Stomach (tissue), 19 donors: ENCODE measurements at regions of chr6 and their contacts with region 1.

Region 1: DNA sequence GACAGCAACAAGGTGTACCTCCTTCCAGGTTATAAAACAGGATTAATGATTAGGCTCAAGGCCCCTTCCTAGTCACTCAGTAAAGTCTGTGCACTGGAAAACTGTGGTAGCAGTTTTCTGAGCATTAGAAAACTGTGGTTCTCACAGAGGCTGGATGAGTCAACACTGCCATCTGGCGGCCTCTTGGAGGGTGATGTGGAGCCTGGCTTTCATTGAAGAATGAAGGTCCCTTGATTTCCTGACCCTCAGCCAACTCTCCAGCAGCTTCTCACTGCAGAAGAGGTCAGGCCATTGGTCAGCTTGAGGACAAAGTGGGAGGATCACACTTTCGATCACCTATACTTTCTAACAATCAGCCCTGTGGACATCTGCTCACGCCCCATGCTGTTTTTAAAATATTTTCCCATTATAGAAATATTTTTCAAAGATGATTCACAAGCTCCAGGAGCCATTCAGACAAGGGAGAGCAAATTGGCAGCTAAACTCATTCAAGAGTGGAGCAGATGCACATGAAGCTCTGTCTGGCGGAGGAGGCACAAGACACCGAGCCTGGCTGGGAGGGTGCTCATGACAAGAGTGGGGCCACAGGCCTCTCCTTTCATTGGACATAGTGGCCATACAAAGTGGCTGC is 23.2 kb downstream of the PSMB1 start:
- DNase-seq: peak; percentile 83 to 92
- H3K4me3 ChIP-seq: no peak overlapping the region
- H3K27ac ChIP-seq: no peak overlapping the region
- H3K4me1 ChIP-seq: no peaks in the 10 kb centered on the region
- H3K27me3 ChIP-seq: no peaks in the 10 kb centered on the region
- CTCF ChIP-seq: peak in 5 of 7 experiments; percentile 40 to 84 (median 66)
- EP300 ChIP-seq: no peak
- POLR2A ChIP-seq: no peak

Region 2: GRCh38 chr6:169789982-169790927 is 739.7 kb before region 1 on chr6:
- intact Hi-C with region 1: loop called (anchors 10 kb)
- DNase-seq: peak; percentile 75 to 92
- H3K4me3 ChIP-seq: peak overlapping the region; percentile 42 to 52 (median 46)
- H3K27ac ChIP-seq: peak overlapping the region; percentile 45 to 80 (median 72)
- H3K4me1 ChIP-seq: peaks cover 6 to 33% (median 21%) of the 10 kb centered on the region in 4 donors
- H3K27me3 ChIP-seq: no peaks in the 10 kb centered on the region
- CTCF ChIP-seq: peak in 5 of 7 experiments; percentile 94 to 99 (median 95)
- EP300 ChIP-seq: no peak
- POLR2A ChIP-seq: no peak

Region 3: GRCh38 chr6:169824021-169824420 is 705.9 kb before region 1 on chr6:
- intact Hi-C with region 1: loop called (anchors 10 kb)
- DNase-seq: no peak
- H3K4me3 ChIP-seq: no peak overlapping the region
- H3K27ac ChIP-seq: no peak overlapping the region
- H3K4me1 ChIP-seq: no peaks in the 10 kb centered on the region
- H3K27me3 ChIP-seq: peaks cover 0 to 33% (median 10%) of the 10 kb centered on the region in 3 donors
- CTCF ChIP-seq: no peak
- EP300 ChIP-seq: no peak
- POLR2A ChIP-seq: no peak